Heart left ventricle (tissue), 16 donors: ENCODE measurements at regions of chr12 and their contacts with region 1.

Region 1: GRCh38 chr12:1949771-1950470 is 31.5 kb upstream of the CACNA2D4 start:
- DNase-seq: no peak
- ATAC-seq: peak in 3 of 4 donors; percentile 63 to 81 (median 73)
- H3K4me3 ChIP-seq: no peak overlapping the region
- H3K27ac ChIP-seq: peak overlapping the region in 9 of 12 donors; percentile 17 to 83 (median 42)
- H3K4me1 ChIP-seq: peaks cover 0 to 10% (median 0%) of the 10 kb centered on the region in 12 donors
- H3K27me3 ChIP-seq: no peaks in the 10 kb centered on the region
- CTCF ChIP-seq: no peak
- POLR2A ChIP-seq: no peak

Region 2: GRCh38 chr12:2004113-2004929 is 54.4 kb after region 1 on chr12 and contains the start of gene DCP1B:
- intact Hi-C with region 1: loop called in 1 of 10 experiments (anchors 1 kb)
- DNase-seq: peak; percentile 95 to 97 (median 97)
- ATAC-seq: peak; percentile 95 to 99 (median 98)
- H3K4me3 ChIP-seq: peak within 1 kb of the TSS; percentile 64 to 95 (median 88)
- H3K27ac ChIP-seq: peak within 1 kb of the TSS; percentile 63 to 94 (median 90)
- H3K4me1 ChIP-seq: peaks cover 0 to 58% (median 31%) of the 10 kb centered on the region in 12 donors
- H3K27me3 ChIP-seq: no peaks in the 10 kb centered on the region
- CTCF ChIP-seq: peak in 1 of 12 donors; percentile 10
- POLR2A ChIP-seq: peak in 1 of 2 donors; percentile 58
- total RNA-seq, gene DCP1B: 1.4 to 5.4 (median 2.4) TPM